Sigmoid colon (tissue), 7 donors: ENCODE measurements at regions of chr17 and their contacts with region 1.

Region 1: GRCh38 chr17:50269477-50270434 is 4.5 kb upstream of the TMEM92 start:
- DNase-seq: peak; percentile 88
- H3K4me3 ChIP-seq: no peak overlapping the region
- H3K27ac ChIP-seq: peak overlapping the region; percentile 21 to 91 (median 70)
- H3K4me1 ChIP-seq: peaks cover 0 to 76% (median 66%) of the 10 kb centered on the region in 4 donors
- H3K27me3 ChIP-seq: no peaks in the 10 kb centered on the region
- CTCF ChIP-seq: peak; percentile 72 to 87 (median 82)
- EP300 ChIP-seq: no peak
- POLR2A ChIP-seq: no peak

Region 2: GRCh38 chr17:50114849-50115357 is 154.9 kb before region 1 on chr17:
- intact Hi-C with region 1: loop called (anchors 5 kb)
- DNase-seq: no peak
- H3K4me3 ChIP-seq: no peak overlapping the region
- H3K27ac ChIP-seq: no peak overlapping the region
- H3K4me1 ChIP-seq: peaks cover 0 to 51% (median 43%) of the 10 kb centered on the region in 4 donors
- H3K27me3 ChIP-seq: no peaks in the 10 kb centered on the region
- CTCF ChIP-seq: peak in 1 of 4 experiments; percentile 19
- EP300 ChIP-seq: no peak
- POLR2A ChIP-seq: no peak

Region 3: DNA sequence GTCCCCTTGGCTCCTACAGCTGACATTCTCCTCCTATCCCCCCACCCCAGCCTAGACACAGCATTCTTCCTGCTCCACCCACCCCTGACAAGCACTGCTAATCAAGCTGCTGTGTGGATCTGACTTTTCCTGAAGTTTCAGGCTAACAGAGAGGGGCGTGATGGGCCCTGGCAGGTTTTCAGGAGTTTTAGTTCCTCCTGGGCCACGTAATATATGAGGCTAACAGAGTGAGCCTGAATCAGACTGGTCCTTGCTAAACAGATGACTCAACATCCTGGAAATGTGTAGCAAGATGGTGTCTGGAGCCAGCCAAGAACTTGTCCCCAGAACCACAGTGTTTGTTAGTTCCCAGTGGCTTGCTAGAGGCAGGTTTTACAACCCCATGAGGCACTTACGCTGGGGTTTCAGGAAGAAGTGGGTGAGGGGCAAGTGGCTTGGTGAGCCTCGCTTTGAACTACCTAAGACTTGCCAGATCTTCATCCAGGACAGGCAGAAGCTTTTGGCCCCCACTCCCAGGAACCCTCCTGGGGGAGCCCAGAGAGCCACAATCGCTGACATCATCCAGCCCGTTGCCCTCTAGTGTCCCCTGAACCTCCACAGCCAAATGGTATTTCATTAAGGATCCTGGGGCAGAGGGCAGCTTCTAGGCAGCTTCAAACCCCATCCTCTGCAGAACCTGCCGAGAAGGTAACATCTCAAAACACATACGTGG is 20.4 kb after region 1 on chr17:
- intact Hi-C with region 1: loop called (anchors 1 kb)
- DNase-seq: peak; percentile 94
- H3K4me3 ChIP-seq: peak overlapping the region in 2 of 4 donors; percentile 9 to 12
- H3K27ac ChIP-seq: peak overlapping the region; percentile 84 to 89 (median 88)
- H3K4me1 ChIP-seq: peaks cover 0 to 37% (median 31%) of the 10 kb centered on the region in 4 donors
- H3K27me3 ChIP-seq: no peaks in the 10 kb centered on the region
- CTCF ChIP-seq: no peak
- EP300 ChIP-seq: peak in 3 of 4 donors; percentile 43 to 90 (median 77)
- POLR2A ChIP-seq: no peak